Breast epithelium (tissue), 4 donors: ENCODE measurements at regions of chr2 and their contacts with region 1.

Region 1: GRCh38 chr2:101871480-101871879 is 120.3 kb upstream of the IL1R2 start:
- DNase-seq: no peak
- H3K4me3 ChIP-seq: no peak overlapping the region
- H3K27ac ChIP-seq: peak overlapping the region in 1 of 2 donors; percentile 59
- H3K4me1 ChIP-seq: no peaks in the 10 kb centered on the region
- H3K27me3 ChIP-seq: no peaks in the 10 kb centered on the region
- CTCF ChIP-seq: no peak
- POLR2A ChIP-seq: no peak

Region 2: GRCh38 chr2:101830555-101830954 is 40.9 kb before region 1 on chr2:
- intact Hi-C with region 1: loop called (anchors 1 kb)
- DNase-seq: no peak
- H3K4me3 ChIP-seq: no peak overlapping the region
- H3K27ac ChIP-seq: no peak overlapping the region
- H3K4me1 ChIP-seq: no peaks in the 10 kb centered on the region
- H3K27me3 ChIP-seq: no peaks in the 10 kb centered on the region
- CTCF ChIP-seq: no peak
- POLR2A ChIP-seq: no peak